ENCODE measurements at regions of chr15 and their contacts with region 1.

Region 1: DNA sequence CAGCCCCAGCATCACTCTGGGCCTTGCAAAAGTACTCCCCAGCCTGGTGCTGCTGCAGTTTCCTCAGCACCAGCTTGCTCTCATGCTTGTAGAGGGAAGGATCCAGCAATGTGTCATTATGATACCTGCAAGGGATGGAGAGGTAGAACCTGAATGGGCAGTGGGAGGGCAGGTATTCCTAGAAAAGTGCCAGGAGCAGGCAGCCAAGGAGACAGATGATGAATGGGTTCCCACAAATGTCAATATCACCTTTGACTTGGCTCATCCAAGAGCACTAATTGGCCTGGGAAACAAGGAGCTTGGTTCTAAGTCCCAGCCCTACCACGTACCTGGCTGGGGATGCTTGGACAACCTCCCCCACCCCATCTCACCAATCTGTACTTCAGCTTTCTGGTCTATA is 9.4 kb downstream of the CILP start:
- DNase-seq: no peak
- H3K4me3 ChIP-seq: no peak overlapping the region
- CTCF ChIP-seq: no peak
- POLR2A ChIP-seq: no peak

Region 2: DNA sequence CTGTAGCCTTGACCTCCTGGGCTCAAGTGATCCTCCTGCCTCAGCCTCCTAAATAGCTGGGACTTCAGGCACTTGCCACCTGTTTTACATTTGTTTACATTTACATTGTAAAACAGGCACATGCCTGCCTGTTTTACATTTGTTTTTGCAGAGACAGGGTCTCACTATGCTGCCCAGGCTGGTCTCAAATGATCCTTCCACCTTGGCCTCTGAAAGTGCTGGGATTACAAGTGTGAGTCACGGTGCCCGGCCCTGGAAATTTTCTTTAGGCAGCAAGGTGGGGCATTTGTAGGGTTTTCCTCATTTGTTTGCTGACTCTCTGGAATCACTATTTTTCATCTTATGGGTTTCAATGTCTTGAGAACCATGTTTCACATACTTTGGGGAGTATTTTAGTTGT is 401.4 kb before region 1 on chr15:
- intact Hi-C with region 1: loop called (anchors 5 kb)
- DNase-seq: no peak
- H3K4me3 ChIP-seq: no peak overlapping the region
- CTCF ChIP-seq: no peak
- POLR2A ChIP-seq: no peak

Measured in lower leg skin (tissue), 4 donors.